ENCODE measurements at regions of chr11 and their contacts with region 1.

Region 1: GRCh38 chr11:12192794-12193514 is 82.6 kb downstream of the MICAL2 start:
- DNase-seq: no peak
- H3K4me3 ChIP-seq: no peak overlapping the region
- H3K27ac ChIP-seq: no peak overlapping the region
- H3K4me1 ChIP-seq: peaks cover 3% of the 10 kb centered on the region
- H3K27me3 ChIP-seq: no peaks in the 10 kb centered on the region
- CTCF ChIP-seq: no peak
- EP300 ChIP-seq: no peak
- POLR2A ChIP-seq: no peak

Region 2: GRCh38 chr11:12213920-12214319 is 21.0 kb after region 1 on chr11:
- intact Hi-C with region 1: loop called in 1 of 4 experiments (anchors 2 kb)
- DNase-seq: no peak
- H3K4me3 ChIP-seq: no peak overlapping the region
- H3K27ac ChIP-seq: no peak overlapping the region
- H3K4me1 ChIP-seq: peaks cover 2% of the 10 kb centered on the region
- H3K27me3 ChIP-seq: no peaks in the 10 kb centered on the region
- CTCF ChIP-seq: no peak
- EP300 ChIP-seq: no peak
- POLR2A ChIP-seq: no peak

Region 3: DNA sequence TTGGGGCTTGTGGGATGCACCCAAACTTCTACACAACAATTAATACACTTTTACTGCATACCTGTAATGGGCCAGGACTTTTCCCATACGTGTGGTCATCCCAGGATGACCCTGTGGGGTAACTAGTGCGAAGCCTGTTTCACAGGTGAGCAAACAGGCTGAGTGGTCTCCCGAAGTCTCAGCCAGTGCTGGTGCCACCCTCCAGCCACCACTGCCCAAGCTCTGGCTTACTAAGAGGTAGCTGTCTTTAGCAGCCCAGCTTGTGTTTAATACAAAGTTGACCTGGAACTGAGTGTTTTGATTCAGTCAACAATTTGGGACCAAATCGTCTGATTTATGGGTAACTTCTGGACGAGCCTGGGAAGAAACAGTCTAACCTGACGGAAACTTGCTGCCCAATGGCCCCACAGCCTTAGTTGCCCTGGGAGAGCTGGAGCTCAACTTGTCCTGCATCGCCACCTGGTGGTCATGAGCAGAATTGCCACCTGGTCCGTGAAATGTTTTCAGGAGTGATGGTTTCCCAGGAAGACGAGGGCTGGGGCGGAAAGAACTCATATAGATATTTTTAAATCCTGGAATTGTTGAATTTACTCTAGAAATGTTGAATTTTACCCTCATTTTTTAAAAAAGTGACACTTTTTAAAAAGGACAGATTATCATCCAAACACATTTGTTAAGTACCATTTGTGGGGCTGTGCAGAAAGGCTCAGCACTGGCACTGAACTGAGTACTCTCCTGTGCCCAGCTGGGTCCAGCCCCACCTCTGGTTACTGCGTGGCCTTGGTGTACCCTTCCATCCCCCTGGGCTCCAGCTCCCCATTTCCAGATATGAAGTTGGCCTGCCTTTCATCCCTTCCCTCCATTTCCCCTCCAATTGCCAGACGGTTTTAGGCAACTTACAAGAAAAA is 88.9 kb after region 1 on chr11:
- intact Hi-C with region 1: no loop called
- DNase-seq: peak; percentile 70 to 89 (median 87)
- H3K4me3 ChIP-seq: no peak overlapping the region
- H3K27ac ChIP-seq: no peak overlapping the region
- H3K4me1 ChIP-seq: peaks cover 5% of the 10 kb centered on the region
- H3K27me3 ChIP-seq: no peaks in the 10 kb centered on the region
- CTCF ChIP-seq: peak; percentile 86 to 98 (median 97)
- EP300 ChIP-seq: no peak
- POLR2A ChIP-seq: peak; percentile 14

Region 4: GRCh38 chr11:13942983-13943382 is 1750.0 kb after region 1 on chr11:
- intact Hi-C with region 1: no loop called
- DNase-seq: no peak
- H3K4me3 ChIP-seq: no peak overlapping the region
- H3K27ac ChIP-seq: no peak overlapping the region
- H3K4me1 ChIP-seq: peaks cover 6% of the 10 kb centered on the region
- H3K27me3 ChIP-seq: no peaks in the 10 kb centered on the region
- CTCF ChIP-seq: no peak
- EP300 ChIP-seq: no peak
- POLR2A ChIP-seq: no peak